ENCODE measurements at regions of chr1 and their contacts with region 1.

Region 1: GRCh38 chr1:178031856-178032320 is 62.0 kb upstream of the RASAL2 start:
- DNase-seq: peak; percentile 97
- H3K4me3 Mint-ChIP-seq: no peak overlapping the region
- H3K27ac Mint-ChIP-seq: no peak overlapping the region
- H3K4me1 Mint-ChIP-seq: no peaks in the 10 kb centered on the region
- H3K27me3 Mint-ChIP-seq: no peaks in the 10 kb centered on the region
- CTCF ChIP-seq: peak; percentile 92

Region 2: DNA sequence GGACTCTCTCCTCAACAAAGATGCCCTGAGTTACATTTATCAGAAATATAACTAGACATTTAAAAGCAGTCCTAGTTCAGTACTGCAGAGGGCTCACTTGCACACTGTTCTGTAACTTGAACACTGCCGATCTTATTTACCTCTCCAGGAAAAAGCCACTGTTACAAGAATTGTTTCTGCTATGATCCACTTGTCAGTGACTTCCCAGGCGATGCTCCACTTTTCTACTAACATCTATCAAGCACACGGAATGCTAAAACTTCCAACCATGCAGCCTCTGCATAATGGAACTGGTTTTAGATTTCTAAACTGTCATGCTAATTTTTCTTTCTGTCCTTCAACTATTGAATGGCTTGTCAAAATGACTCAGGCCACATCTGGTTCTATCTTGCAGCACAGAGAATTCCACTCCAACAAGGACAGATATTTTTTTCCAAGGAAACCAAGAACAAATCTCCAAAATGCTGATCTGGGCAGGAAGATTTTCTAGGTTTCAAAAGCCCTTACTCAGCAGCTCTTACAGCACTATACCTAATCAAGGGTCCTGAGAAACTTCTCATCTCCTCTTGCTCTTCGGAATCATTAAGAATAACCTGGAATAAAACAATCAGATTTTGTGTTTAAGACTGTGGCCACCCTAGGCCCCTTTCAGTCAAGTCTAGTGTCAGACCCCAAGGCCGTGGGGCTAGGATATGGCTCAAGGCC is 71.9 kb before region 1 on chr1:
- CTCF ChIA-PET with region 1: interaction called, 7 read pairs
- POLR2A ChIA-PET with region 1: no interaction called
- intact Hi-C with region 1: loop called (anchors 2 kb)
- DNase-seq: peak; percentile 50
- H3K4me3 Mint-ChIP-seq: no peak overlapping the region
- H3K27ac Mint-ChIP-seq: no peak overlapping the region
- H3K4me1 Mint-ChIP-seq: peaks cover 6% of the 10 kb centered on the region
- H3K27me3 Mint-ChIP-seq: no peaks in the 10 kb centered on the region
- CTCF ChIP-seq: peak; percentile 74

Region 3: DNA sequence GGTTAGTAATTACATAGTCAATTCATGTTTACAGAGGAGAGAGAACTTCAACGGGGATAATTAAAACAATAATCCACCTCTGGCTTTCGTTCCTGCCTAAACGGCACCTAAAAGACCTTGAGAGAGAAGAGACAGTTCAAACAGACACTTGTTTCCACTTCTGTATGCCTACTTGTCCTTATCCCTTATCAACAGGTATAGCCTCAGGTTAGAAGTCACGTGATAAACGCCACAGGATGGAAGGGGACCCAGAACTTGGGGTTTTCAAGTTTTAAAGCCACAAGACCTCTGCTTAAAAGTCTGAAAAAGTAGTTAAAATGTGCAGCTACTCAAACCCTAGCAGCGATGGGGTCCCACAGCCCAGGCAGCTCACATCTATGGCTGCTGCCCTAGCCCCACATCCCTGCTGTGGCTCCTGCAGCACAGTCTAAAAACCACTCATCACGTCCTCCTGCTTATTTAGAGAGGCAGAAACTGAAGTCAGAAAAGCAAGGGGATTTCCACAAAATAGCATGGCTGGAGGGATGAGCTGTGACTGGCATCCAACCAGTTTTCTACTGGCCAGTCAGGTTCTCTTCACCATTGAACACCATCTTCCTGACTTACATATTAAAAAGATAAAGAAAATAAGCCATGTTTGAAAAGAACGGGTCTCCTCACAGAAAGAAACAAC is 10.8 kb before region 1 on chr1:
- CTCF ChIA-PET with region 1: interaction called, 47 read pairs
- POLR2A ChIA-PET with region 1: no interaction called
- intact Hi-C with region 1: no loop called
- DNase-seq: no peak
- H3K4me3 Mint-ChIP-seq: no peak overlapping the region
- H3K27ac Mint-ChIP-seq: no peak overlapping the region
- H3K4me1 Mint-ChIP-seq: no peaks in the 10 kb centered on the region
- H3K27me3 Mint-ChIP-seq: no peaks in the 10 kb centered on the region
- CTCF ChIP-seq: no peak

Region 4: DNA sequence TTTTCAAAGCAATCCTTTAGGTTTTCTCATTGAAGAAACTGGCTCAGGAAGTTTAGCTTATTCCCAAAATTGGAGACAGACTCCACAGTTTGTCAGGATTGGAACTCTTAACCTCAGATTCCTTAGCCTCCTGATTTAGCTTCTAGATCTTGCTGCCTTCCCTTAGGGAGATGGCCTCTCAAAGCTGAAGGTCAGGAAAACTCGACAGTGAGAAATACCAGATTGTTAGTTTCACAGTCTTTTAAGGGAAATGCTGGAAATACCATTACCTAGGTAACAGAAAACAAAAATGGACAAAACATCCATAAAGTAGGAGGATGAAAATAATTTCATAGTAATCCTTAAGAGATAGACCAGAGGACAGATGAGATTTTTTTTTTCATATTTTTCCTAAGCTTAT is 69.8 kb after region 1 on chr1:
- CTCF ChIA-PET with region 1: interaction called, 20 read pairs
- POLR2A ChIA-PET with region 1: no interaction called
- intact Hi-C with region 1: no loop called
- DNase-seq: no peak
- H3K4me3 Mint-ChIP-seq: no peak overlapping the region
- H3K27ac Mint-ChIP-seq: no peak overlapping the region
- H3K4me1 Mint-ChIP-seq: peaks cover 40% of the 10 kb centered on the region
- H3K27me3 Mint-ChIP-seq: no peaks in the 10 kb centered on the region
- CTCF ChIP-seq: no peak

Region 5: DNA sequence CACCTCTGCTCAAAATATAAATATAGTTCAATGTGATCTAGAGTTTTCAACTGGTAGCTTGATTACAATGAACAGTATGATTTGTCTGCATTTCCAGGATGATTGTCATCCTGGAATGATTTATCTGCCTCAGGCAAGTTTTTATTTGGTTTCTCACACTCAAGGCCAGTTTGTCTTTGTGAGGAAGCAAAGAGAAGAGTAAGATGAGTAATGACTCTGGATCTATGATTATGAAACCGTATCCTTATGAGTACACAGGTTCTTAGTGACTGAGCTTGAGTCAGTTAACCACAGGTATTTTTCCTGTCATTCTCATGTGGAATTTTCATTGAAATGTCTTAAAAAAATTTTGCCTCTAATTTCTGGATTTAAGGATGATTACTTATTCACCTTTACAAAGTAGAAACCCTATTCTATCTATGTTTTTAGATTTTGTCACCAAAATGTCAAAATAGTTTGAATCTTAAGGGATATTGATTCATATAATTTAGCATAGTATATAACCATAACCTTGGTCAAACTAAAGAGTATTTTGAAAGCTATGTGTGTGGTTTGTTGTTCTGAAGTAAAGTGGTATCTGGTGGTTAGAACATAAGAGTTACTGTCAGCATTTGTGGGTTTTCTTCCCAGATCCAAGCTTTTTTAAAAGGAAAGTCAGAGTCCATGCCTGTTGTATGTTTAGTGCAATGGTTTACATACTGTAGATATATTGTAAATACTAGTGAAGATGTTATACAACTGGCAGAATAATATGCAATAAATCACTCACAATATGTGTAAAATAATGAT is 207.0 kb after region 1 on chr1:
- CTCF ChIA-PET with region 1: interaction called, 10 read pairs
- POLR2A ChIA-PET with region 1: interaction called, 4 read pairs
- intact Hi-C with region 1: loop called (anchors 1 kb)
- DNase-seq: peak; percentile 100
- H3K4me3 Mint-ChIP-seq: peak overlapping the region; percentile 57
- H3K27ac Mint-ChIP-seq: peak overlapping the region; percentile 96
- H3K4me1 Mint-ChIP-seq: peaks cover 69% of the 10 kb centered on the region
- H3K27me3 Mint-ChIP-seq: no peaks in the 10 kb centered on the region
- CTCF ChIP-seq: no peak

Region 6: GRCh38 chr1:178294654-178295053 is 262.8 kb after region 1 on chr1:
- CTCF ChIA-PET with region 1: interaction called, 32 read pairs
- POLR2A ChIA-PET with region 1: interaction called, 3 read pairs
- intact Hi-C with region 1: no loop called
- DNase-seq: no peak
- H3K4me3 Mint-ChIP-seq: no peak overlapping the region
- H3K27ac Mint-ChIP-seq: no peak overlapping the region
- H3K4me1 Mint-ChIP-seq: peaks cover 7% of the 10 kb centered on the region
- H3K27me3 Mint-ChIP-seq: no peaks in the 10 kb centered on the region
- CTCF ChIP-seq: no peak

Region 7: DNA sequence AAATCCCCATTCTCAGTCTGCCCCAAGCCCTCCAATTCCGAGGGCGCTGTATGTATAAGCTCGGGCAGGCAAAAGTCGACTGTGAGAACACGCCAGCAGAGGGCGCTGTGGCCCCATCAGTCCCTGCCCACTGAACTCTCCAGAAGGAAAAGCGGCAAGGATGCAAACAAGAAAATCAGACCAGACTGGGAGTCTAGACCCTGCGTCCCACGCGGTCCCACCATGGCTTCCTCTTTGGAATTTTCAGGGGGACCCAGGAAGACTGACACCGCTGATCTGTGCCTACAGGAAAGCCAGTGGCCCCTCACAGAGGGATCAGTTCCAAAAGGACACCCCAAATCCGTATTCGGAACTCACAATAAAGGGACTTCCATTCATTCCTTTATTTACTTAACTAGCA is 500.5 kb after region 1 on chr1:
- CTCF ChIA-PET with region 1: interaction called, 3 read pairs
- POLR2A ChIA-PET with region 1: no interaction called
- intact Hi-C with region 1: loop called (anchors 10 kb)
- DNase-seq: peak; percentile 88
- H3K4me3 Mint-ChIP-seq: no peak overlapping the region
- H3K27ac Mint-ChIP-seq: no peak overlapping the region
- H3K4me1 Mint-ChIP-seq: peaks cover 36% of the 10 kb centered on the region
- H3K27me3 Mint-ChIP-seq: peaks cover 7% of the 10 kb centered on the region
- CTCF ChIP-seq: peak; percentile 99